Dorsolateral prefrontal cortex (tissue), 120 donors: ENCODE measurements at regions of chr18 and their contacts with region 1.

Region 1: DNA sequence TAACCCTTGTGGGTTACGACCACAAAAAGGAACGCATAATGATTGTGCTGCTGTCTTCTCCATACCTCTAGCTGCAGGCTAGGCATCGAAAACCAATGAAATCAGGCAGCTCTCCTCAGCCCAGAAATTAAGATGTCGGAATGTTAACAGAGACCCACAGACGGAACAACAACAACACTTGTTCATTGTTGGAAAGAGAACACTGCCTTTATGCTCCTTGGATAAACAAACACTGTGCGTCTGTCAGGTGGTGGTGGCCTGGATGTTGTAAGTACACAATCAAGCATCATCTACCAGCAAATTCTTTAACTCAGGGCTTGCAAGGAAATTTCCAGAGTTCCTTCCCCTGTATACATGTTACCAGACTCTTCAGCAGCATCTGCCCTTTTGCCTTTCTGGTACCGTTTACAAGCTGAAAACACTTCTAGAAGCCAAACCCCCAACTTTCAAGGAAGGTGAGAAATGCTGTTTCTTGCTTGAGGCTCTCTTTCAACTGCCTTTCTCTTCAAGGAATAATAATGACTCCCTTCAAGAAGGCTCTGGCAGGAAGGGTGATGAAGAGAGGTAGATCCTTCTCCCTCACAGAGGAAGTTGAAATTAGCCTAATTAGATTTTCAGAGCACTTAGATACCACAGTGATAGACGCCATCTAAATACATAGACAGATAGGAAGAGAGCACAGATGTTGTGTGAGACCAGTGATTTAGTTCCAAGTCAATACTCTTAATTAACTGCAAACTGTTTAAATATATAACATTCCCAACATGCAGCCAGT is 332.7 kb downstream of the ZNF521 start:
- DNase-seq: peak in 2 of 10 donors; percentile 35 to 56
- H3K4me3 ChIP-seq: peak overlapping the region in 1 of 59 donors; percentile 20
- H3K27ac ChIP-seq: peak overlapping the region in 51 of 59 donors; percentile 1 to 88 (median 68)
- H3K27me3 ChIP-seq: peaks cover 0 to 7% (median 0%) of the 10 kb centered on the region in 45 donors
- CTCF ChIP-seq: no peak

Region 2: GRCh38 chr18:23547846-23548245 is 1471.4 kb before region 1 on chr18:
- intact Hi-C with region 1: no loop called
- DNase-seq: no peak
- H3K4me3 ChIP-seq: no peak overlapping the region
- H3K27ac ChIP-seq: peak overlapping the region in 13 of 59 donors; percentile 1 to 57 (median 25)
- H3K27me3 ChIP-seq: no peaks in the 10 kb centered on the region
- CTCF ChIP-seq: no peak

Region 3: DNA sequence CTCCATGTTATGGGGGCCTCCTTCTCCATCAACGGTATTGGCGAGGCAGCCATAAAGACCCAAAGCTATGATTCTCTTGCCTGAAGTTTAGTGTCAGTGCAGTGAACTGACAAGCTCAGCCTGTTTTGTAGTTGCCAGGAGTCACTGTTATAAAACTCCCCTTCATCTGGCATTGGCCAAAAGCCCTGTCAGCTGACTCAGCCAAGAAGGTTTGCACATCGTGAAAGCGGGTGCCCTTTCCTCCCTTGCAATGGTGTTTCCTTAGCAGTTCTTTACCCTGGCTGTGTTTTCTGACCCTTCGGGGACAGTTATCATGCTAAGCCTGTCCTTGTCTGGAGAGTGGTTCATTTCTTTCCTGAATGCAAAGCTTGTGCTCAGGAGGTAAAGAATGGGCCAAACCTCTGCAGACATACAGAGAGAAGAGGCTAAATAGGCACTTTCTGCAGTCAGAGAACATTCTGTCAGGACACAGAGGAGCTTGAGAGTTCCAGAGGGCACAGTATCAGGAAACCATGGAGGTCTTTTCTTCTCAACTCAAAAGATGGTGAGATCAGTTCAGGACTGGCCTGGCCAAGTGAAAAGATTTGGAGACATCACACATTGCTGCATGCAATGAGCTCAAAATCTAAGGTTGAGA is 81.5 kb before region 1 on chr18:
- intact Hi-C with region 1: no loop called
- DNase-seq: no peak
- H3K4me3 ChIP-seq: no peak overlapping the region
- H3K27ac ChIP-seq: peak overlapping the region in 1 of 59 donors; percentile 59
- H3K27me3 ChIP-seq: no peaks in the 10 kb centered on the region
- CTCF ChIP-seq: no peak

Region 4: DNA sequence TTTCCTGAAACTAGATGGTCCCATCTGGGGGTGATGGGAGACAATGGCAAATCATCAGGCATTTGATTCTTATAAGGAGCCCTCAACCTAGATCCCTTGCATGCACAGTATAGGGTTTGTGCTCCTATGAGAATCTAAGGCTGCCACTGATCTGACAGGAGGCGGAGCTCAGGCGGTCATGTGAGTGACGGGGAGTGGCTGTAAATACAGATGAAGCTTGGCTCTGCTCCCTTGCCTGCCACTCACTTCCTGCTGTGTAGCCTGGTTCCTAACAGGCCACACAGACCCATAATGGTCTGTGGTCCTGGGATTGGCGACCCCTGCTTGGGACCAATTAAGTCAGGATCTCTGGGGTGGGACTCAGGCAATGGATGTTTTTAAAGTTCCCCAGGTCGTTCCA is 39.2 kb after region 1 on chr18:
- intact Hi-C with region 1: loop called in 1 of 2 experiments (anchors 5 kb)
- DNase-seq: peak in 9 of 10 donors; percentile 45 to 76 (median 57)
- H3K4me3 ChIP-seq: no peak overlapping the region
- H3K27ac ChIP-seq: peak overlapping the region in 7 of 59 donors; percentile 0 to 81 (median 22)
- H3K27me3 ChIP-seq: no peaks in the 10 kb centered on the region
- CTCF ChIP-seq: no peak